Activated naive CD4-positive, alpha-beta T cell treated with anti-CD3 and anti-CD28 coated beads for 36 hours (primary cell): ENCODE measurements at regions of chr5 and their contacts with region 1.

Region 1: DNA sequence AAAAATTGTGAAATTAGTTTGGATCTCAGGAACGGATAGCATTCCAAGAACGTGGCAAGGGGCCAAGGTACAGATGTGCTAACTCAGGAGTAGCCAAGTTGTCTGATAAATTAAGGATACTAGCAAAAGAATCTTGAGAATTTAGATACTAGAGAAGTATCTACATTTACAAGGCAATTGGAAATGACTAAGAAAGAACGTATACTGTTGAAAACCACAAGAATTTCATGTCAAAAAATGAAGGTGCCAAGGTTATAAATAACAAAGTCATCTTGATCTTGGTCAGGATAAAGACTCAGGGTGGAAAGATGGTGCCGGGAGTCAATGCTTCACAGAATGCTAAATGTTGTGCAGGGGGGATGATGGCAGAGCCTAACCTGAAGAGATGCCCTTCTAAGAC is 19.2 kb downstream of the CAPSL start:
- DNase-seq: peak; percentile 54
- H3K4me3 Mint-ChIP-seq: no peak overlapping the region
- H3K27ac Mint-ChIP-seq: peak overlapping the region; percentile 46
- H3K4me1 Mint-ChIP-seq: peaks cover 45% of the 10 kb centered on the region
- H3K27me3 Mint-ChIP-seq: no peaks in the 10 kb centered on the region

Region 2: GRCh38 chr5:35908228-35908627 is 11.0 kb before region 1 on chr5:
- CTCF ChIA-PET with region 1: interaction called, 22 read pairs
- intact Hi-C with region 1: loop called (anchors 1 kb)
- DNase-seq: no peak
- H3K4me3 Mint-ChIP-seq: no peak overlapping the region
- H3K27ac Mint-ChIP-seq: peak overlapping the region; percentile 72
- H3K4me1 Mint-ChIP-seq: peaks cover 43% of the 10 kb centered on the region
- H3K27me3 Mint-ChIP-seq: no peaks in the 10 kb centered on the region

Region 3: DNA sequence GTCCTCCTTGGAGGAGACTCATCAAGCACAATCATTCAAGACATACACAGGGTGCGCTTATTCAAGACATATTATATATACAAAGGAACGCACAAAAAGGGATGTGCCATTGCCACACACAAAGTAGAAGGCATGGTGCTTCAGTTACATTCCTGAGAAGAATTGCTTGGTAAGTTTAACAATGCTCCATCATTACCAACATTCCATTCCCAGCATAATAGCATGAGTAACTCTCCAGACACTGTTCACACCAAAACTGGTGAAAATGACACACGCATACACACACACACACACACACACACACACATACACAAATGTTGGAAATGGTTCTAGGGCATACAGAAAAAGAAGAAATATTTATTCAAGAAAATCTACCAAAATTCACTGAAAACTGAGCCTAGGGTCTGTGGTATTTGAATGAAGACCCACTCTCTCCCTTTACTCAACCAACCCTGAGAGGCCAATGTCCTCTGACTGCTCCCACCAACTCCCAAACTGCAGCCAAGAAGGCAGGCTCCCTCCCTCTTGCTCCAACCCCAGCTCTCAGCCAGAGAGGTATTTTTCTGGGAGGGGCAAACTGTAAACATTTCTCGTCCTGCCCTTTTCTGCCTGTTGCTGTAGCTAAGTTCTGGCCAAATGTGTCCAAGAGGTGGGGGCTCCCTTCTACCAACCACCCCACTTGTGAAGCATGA is 52.1 kb after region 1 on chr5:
- CTCF ChIA-PET with region 1: no interaction called
- intact Hi-C with region 1: no loop called
- DNase-seq: no peak
- H3K4me3 Mint-ChIP-seq: no peak overlapping the region
- H3K27ac Mint-ChIP-seq: no peak overlapping the region
- H3K4me1 Mint-ChIP-seq: no peaks in the 10 kb centered on the region
- H3K27me3 Mint-ChIP-seq: peaks cover 11% of the 10 kb centered on the region